ENCODE measurements at regions of chr6 and their contacts with region 1.

Region 1: GRCh38 chr6:41063884-41064285 is 8.3 kb downstream of the OARD1 start:
- DNase-seq: no peak
- ATAC-seq: no peak
- H3K4me3 Mint-ChIP-seq: no peak overlapping the region
- H3K27ac Mint-ChIP-seq: no peak overlapping the region
- H3K4me1 Mint-ChIP-seq: peaks cover 22% of the 10 kb centered on the region
- H3K27me3 Mint-ChIP-seq: no peaks in the 10 kb centered on the region

Region 2: GRCh38 chr6:40116832-40117231 is 947.1 kb before region 1 on chr6:
- CTCF ChIA-PET with region 1: no interaction called
- DNase-seq: no peak
- ATAC-seq: no peak
- H3K4me3 Mint-ChIP-seq: no peak overlapping the region
- H3K27ac Mint-ChIP-seq: no peak overlapping the region
- H3K4me1 Mint-ChIP-seq: no peaks in the 10 kb centered on the region
- H3K27me3 Mint-ChIP-seq: no peaks in the 10 kb centered on the region

Region 3: DNA sequence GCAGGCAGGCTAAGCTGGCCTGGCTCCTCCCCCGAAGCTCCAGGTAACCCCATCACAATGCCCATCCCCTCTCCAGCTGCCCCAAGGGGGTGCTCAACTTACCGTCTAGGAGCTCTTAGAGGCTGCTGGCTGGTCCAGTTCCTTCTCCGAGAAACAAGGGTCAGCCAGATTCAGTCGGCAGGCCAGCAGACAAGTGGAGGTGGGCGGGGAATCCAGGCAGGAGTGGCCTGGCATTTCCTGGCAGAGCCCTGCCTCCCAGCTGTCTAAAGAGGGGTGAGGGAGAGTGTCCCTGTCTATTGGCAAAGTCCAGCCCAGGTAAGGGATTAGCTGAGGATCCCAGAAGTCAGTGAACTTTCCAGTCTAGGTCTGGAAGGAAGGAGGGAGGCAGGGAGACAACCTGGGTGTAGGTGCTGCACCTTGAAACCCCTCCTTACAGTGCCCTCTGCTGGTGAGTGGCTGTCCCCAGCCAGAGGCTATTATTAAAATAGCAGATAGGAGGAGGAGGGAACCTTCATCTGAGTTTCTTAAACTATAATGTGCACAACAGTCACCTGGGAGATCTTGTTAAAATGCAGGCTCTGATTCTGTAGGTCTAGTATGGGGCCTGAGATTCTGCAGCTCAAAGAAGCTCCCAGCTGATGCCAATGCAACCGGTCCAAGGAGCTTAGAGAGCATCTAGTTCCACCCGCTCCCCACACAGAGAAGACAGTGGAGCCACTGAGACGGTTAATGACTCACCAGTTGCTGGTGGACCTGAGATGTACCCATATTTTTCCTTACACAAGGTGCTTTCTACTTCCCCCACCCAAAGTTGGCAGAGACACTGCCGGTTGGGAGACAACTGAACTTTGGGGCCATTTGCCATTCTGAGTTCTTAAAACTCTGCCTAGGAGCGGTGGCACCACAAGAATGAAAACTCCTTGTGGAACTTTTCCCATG is 24.6 kb before region 1 on chr6 and contains the start of gene UNC5CL:
- CTCF ChIA-PET with region 1: interaction called, 12 read pairs
- DNase-seq: peak; percentile 75
- ATAC-seq: peak; percentile 77
- H3K4me3 Mint-ChIP-seq: no peak within 1 kb of the TSS
- H3K27ac Mint-ChIP-seq: no peak within 1 kb of the TSS
- H3K4me1 Mint-ChIP-seq: peaks cover 6% of the 10 kb centered on the region
- H3K27me3 Mint-ChIP-seq: no peaks in the 10 kb centered on the region
- total RNA-seq, gene UNC5CL: 1.3 to 2.5 TPM

Measured in activated CD8-positive, alpha-beta memory T cell treated with anti-CD3 and anti-CD28 coated beads, Interleukin-2, amount 10 ng/mL, durations not matched to agents 7 days and 5 days (primary cell).